ENCODE measurements at regions of chr10 and their contacts with region 1.

Region 1: DNA sequence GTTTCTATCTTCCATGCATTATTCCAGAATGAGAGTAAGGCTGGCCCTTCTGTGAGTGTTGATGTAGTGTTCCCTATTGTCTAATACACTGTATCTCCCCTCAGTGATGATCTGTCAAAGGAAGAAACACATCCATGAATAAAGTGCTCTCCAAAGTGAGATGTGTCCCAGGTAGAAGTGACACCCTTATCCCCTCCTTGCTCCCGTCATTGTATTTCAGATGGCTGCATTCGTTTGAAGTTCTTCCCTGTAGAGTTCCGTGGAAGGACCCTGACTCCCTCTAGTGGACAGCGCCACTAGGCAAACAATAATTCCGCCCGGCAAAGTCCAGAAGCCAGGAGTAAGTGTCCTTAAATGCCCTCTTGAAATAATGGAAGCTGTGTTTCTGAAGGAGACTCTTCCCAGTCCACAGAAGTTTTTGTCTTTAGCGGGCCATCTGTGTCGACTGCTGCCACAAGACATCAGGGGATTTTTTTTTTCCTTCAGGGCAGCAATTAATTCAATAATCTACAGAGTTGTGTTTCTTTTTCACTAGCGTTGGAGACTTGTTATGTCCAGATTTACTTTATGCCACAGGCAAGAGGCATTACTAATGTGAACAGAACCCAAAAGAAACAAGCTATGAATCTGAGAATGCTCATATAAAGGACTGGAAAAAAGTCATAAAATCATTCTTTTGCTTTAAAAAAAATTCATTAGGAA is 64.6 kb downstream of the THNSL1 start:
- DNase-seq: peak; percentile 92
- H3K4me3 ChIP-seq: no peak overlapping the region
- H3K27ac ChIP-seq: no peak overlapping the region
- H3K4me1 ChIP-seq: no peaks in the 10 kb centered on the region
- H3K27me3 ChIP-seq: no peaks in the 10 kb centered on the region
- CTCF ChIP-seq: peak; percentile 76

Region 2: DNA sequence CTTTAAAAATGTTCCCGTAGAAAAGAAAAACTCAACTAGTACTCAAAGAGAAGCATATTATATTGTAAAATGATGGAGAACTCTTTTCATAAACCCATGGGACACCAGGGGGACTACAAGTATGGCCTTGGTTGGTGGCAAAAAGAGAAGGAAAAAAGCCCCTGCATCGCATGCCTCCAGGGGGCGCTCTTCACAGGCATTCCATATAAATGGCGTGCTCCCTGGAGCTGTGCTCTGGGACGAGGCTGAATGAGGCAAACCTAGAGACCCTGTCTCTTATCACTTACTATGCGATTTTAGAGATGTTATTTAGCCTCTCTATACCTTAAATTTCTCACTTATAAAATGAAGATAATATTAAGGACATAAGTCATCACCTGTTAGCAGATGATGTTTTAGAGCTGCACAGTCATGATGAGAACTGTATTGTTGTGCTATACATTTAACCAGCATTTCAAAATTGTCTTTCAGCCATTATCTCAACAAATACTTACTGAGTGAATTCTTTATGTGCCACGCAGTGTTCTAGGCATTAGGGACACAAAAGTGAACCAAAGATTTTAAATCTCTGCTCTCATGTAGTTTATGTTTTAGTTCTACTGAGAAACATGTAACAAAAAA is 463.1 kb before region 1 on chr10:
- intact Hi-C with region 1: loop called (anchors 10 kb)
- DNase-seq: peak; percentile 71
- H3K4me3 ChIP-seq: no peak overlapping the region
- H3K27ac ChIP-seq: no peak overlapping the region
- H3K4me1 ChIP-seq: no peaks in the 10 kb centered on the region
- H3K27me3 ChIP-seq: no peaks in the 10 kb centered on the region
- CTCF ChIP-seq: peak; percentile 87

Region 3: DNA sequence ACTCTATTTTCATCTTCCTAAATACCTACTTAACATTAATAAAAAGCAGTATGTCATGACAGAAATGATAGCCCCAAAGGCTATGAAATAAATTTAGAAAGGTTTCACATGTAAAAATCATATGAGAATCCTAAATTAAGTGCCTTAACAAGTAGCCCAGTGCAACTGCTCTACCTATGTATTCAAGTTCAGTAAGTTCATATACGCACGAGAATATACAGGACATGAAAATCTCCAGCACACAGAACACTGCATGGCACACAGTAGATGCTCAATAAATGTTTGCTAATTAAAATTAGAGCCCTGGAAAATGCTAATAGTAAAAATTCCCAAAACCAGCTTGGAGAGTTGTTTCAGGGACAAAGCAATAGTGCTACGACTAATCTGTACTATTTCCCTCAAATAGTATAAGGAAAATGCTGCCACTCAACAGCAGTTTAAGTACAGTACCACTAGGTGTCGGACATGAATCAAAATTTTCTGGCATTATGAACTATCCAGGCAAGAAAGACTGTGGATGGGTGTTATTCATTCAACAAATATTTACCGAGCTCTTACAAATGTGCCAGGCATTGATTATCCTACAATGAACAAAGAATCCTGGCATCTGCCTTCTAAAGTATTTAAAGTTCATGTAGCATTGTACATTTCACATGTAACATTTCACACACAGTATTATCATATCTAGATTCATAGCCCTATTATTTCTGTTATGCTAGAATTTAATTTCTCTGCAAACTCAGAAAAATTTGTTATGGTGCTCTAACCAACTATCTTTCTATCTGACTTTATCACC is 438.2 kb before region 1 on chr10:
- intact Hi-C with region 1: loop called (anchors 5 kb)
- DNase-seq: peak; percentile 37
- H3K4me3 ChIP-seq: no peak overlapping the region
- H3K27ac ChIP-seq: peak overlapping the region; percentile 19
- H3K4me1 ChIP-seq: peaks cover 7% of the 10 kb centered on the region
- H3K27me3 ChIP-seq: no peaks in the 10 kb centered on the region
- CTCF ChIP-seq: peak; percentile 77

Region 4: DNA sequence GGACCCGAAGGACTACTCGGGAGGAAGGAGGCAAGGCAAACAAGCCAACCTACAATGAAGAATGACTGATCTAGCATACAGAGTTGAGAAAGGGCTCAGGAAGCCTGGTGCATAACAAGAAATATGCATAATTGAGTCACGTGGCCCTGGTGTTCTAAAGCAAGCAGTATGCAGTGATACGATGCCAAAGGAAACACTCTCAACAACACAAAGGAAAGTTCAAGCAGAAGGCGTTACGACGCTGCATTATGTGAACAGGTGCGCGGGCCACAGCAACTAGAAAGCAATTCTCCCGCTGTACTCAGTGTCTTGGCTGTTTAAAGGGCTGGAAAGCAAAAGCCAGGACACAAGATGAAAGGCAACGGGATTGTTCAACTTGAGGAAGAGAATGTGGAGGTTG is 229.4 kb before region 1 on chr10:
- intact Hi-C with region 1: no loop called
- DNase-seq: peak; percentile 63
- H3K4me3 ChIP-seq: no peak overlapping the region
- H3K27ac ChIP-seq: no peak overlapping the region
- H3K4me1 ChIP-seq: no peaks in the 10 kb centered on the region
- H3K27me3 ChIP-seq: no peaks in the 10 kb centered on the region
- CTCF ChIP-seq: no peak

Region 5: DNA sequence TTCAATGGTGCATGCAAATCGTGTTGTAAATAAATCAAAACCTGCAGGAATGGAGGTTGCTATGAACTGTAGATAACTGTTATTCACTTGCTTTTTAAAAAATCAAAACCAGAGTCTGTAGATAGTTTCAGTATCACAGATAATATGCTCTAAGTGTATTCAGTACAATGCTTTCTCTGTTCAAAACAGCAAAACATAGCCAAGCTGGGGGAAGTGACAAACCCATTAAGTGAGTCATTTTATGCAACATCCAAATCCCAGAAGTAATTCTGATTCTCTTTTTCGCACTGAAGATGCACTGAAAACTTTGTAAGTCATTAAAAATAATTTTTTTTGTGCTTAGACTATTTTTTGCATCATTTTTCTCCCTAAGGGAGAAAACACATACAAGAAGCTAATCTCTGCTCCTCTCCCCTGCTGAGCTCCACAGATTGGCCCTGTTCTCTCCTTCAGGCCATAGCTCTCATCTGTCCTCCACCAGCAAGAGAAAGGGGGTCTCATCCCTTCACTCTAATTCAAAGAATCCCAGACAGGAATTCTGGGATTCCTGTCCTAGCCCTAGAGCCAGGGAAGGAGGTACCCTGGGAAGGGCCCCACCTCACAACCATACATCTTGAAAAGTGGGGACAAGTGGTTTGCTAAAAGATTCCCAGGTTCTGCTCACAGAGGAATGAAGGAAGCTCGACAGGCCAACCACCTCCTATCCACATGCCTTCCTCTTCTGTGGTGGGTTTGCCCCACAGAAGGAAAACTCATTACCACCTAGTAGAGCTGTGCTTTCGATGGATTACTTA is 133.5 kb before region 1 on chr10:
- intact Hi-C with region 1: no loop called
- DNase-seq: no peak
- H3K4me3 ChIP-seq: no peak overlapping the region
- H3K27ac ChIP-seq: no peak overlapping the region
- H3K4me1 ChIP-seq: no peaks in the 10 kb centered on the region
- H3K27me3 ChIP-seq: no peaks in the 10 kb centered on the region
- CTCF ChIP-seq: no peak

Region 6: GRCh38 chr10:25026463-25026862 is 54.6 kb before region 1 on chr10:
- intact Hi-C with region 1: loop called (anchors 5 kb)
- DNase-seq: no peak
- H3K4me3 ChIP-seq: no peak overlapping the region
- H3K27ac ChIP-seq: no peak overlapping the region
- H3K4me1 ChIP-seq: no peaks in the 10 kb centered on the region
- H3K27me3 ChIP-seq: no peaks in the 10 kb centered on the region
- CTCF ChIP-seq: no peak

Region 7: DNA sequence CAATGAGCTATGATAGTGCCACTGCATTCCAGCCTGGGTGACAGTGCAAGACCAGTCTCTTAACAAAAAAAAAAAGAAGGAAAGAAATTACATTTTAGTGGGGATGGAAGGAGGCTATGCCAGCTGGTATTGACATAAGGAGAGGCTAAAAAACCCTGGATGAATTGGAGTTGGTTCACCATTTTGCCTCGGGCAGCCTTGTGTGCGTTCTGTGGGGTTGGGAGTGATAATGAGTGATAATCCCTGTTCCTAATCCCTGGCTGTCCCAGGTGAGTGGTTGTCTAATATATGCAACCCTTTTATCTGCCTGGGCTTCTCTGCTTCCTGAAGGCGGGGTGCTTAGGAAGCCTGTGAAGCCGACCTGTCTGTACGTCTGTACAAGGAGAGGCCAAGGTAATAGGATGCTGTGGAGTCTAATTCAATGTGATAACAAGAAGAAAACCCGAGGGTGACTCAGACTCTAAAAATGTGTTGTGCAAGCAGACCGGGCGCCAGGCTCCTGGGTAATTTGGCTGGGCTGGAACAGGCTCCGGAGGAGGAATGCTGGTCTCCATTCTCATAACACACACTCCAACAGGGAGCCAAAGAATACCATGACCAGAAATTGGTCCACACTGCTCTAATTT is 21.2 kb before region 1 on chr10:
- intact Hi-C with region 1: no loop called
- DNase-seq: peak; percentile 77
- H3K4me3 ChIP-seq: no peak overlapping the region
- H3K27ac ChIP-seq: peak overlapping the region; percentile 33
- H3K4me1 ChIP-seq: no peaks in the 10 kb centered on the region
- H3K27me3 ChIP-seq: no peaks in the 10 kb centered on the region
- CTCF ChIP-seq: no peak

Measured in colonic mucosa (tissue), 4 donors.